B cell (primary cell): ENCODE measurements at regions of chr9 and their contacts with region 1.

Region 1: GRCh38 chr9:92669890-92670708 is at the start of gene IPPK:
- DNase-seq: peak; percentile 98
- ATAC-seq: peak; percentile 92
- H3K4me3 ChIP-seq: peak within 1 kb of the TSS; percentile 93 to 100 (median 99)
- H3K4me3 Mint-ChIP-seq: peak within 1 kb of the TSS; percentile 97
- H3K27ac ChIP-seq: peak within 1 kb of the TSS; percentile 87 to 99
- H3K27ac Mint-ChIP-seq: peak within 1 kb of the TSS; percentile 95
- H3K4me1 ChIP-seq: peaks cover 17 to 23% of the 10 kb centered on the region in 2 donors
- H3K4me1 Mint-ChIP-seq: peaks cover 27% of the 10 kb centered on the region
- H3K27me3 ChIP-seq: no peaks in the 10 kb centered on the region
- H3K27me3 Mint-ChIP-seq: no peaks in the 10 kb centered on the region
- CTCF ChIP-seq: no peak
- total RNA-seq, gene IPPK: 6.8 and 8.5 TPM in 2 replicates

Region 2: GRCh38 chr9:92496396-92497176 is 173.5 kb before region 1 on chr9:
- CTCF ChIA-PET with region 1: no interaction called
- POLR2A ChIA-PET with region 1: no interaction called
- intact Hi-C with region 1: no loop called
- DNase-seq: no peak
- ATAC-seq: no peak
- H3K4me3 ChIP-seq: no peak overlapping the region
- H3K4me3 Mint-ChIP-seq: no peak overlapping the region
- H3K27ac ChIP-seq: no peak overlapping the region
- H3K27ac Mint-ChIP-seq: no peak overlapping the region
- H3K4me1 ChIP-seq: no peaks in the 10 kb centered on the region
- H3K4me1 Mint-ChIP-seq: no peaks in the 10 kb centered on the region
- H3K27me3 ChIP-seq: no peaks in the 10 kb centered on the region
- H3K27me3 Mint-ChIP-seq: no peaks in the 10 kb centered on the region
- CTCF ChIP-seq: no peak

Region 3: GRCh38 chr9:92686954-92687353 is 16.9 kb after region 1 on chr9:
- CTCF ChIA-PET with region 1: no interaction called
- POLR2A ChIA-PET with region 1: no interaction called
- intact Hi-C with region 1: no loop called
- DNase-seq: no peak
- ATAC-seq: no peak
- H3K4me3 ChIP-seq: no peak overlapping the region
- H3K4me3 Mint-ChIP-seq: no peak overlapping the region
- H3K27ac ChIP-seq: no peak overlapping the region
- H3K27ac Mint-ChIP-seq: no peak overlapping the region
- H3K4me1 ChIP-seq: peaks cover 0 to 3% of the 10 kb centered on the region in 2 donors
- H3K4me1 Mint-ChIP-seq: peaks cover 9% of the 10 kb centered on the region
- H3K27me3 ChIP-seq: no peaks in the 10 kb centered on the region
- H3K27me3 Mint-ChIP-seq: no peaks in the 10 kb centered on the region
- CTCF ChIP-seq: no peak

Region 4: DNA sequence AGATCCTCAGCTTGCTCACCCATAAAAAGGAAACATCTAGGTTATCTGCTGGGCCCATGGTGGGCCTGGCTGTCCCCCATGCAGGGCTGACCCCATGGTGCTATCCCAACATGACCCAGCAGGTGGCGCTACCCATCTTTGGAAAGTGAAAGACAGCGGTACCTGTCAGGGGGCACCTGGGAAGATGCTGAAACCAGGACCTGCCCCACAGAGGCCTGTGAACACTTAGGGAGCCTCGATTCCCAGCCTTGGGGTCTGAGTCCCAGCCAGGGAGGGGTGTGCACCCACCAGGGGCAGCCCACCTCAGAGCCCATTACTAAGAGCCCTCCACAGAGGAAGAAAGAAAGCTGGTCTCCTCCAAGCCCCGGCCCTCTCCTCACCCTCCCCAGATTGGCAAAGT is 46.5 kb after region 1 on chr9:
- CTCF ChIA-PET with region 1: interaction called, 13 read pairs
- POLR2A ChIA-PET with region 1: no interaction called
- intact Hi-C with region 1: no loop called
- DNase-seq: peak; percentile 82
- ATAC-seq: peak; percentile 79
- H3K4me3 ChIP-seq: no peak overlapping the region
- H3K4me3 Mint-ChIP-seq: no peak overlapping the region
- H3K27ac ChIP-seq: no peak overlapping the region
- H3K27ac Mint-ChIP-seq: no peak overlapping the region
- H3K4me1 ChIP-seq: peaks cover 31 to 66% of the 10 kb centered on the region in 2 donors
- H3K4me1 Mint-ChIP-seq: peaks cover 54% of the 10 kb centered on the region
- H3K27me3 ChIP-seq: no peaks in the 10 kb centered on the region
- H3K27me3 Mint-ChIP-seq: no peaks in the 10 kb centered on the region
- CTCF ChIP-seq: peak; percentile 93

Region 5: DNA sequence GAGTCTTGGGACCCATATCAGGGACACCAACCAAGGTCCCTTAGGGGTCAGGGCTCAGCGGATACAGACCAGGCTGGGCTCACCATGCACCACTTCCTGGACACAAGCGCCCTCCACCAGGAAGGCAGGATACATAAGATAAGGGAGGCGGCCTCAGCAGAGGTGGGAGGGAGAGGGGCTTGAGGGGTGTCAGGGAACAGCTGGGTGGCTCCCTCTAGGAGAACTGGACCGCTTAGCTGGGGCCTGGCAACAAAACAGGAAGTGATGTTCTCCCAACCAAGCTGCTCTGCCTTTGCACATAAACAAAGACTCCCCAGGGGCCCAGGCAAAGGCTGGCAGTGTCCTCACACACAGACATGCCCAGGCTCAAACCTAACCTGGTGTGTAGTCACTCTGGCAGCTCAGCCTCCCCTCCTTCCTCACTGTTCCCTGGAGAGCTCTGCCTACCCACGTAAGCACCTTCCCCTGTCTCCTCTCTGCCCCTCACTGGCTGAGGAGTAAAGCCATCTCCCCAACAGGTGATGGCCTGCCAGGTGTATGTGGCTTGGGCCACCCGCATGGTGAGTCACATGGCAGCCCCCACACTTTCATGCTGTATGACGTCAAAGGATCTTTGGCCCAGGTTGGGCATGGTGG is 100.4 kb after region 1 on chr9:
- CTCF ChIA-PET with region 1: interaction called, 4 read pairs
- POLR2A ChIA-PET with region 1: interaction called, 13 read pairs
- intact Hi-C with region 1: loop called (anchors 1 kb)
- DNase-seq: peak; percentile 82
- ATAC-seq: peak; percentile 94
- H3K4me3 ChIP-seq: peak overlapping the region in 3 of 5 experiments; percentile 2 to 17 (median 12)
- H3K4me3 Mint-ChIP-seq: peak overlapping the region; percentile 74
- H3K27ac ChIP-seq: peak overlapping the region; percentile 79 to 88
- H3K27ac Mint-ChIP-seq: peak overlapping the region; percentile 97
- H3K4me1 ChIP-seq: peaks cover 31 to 40% of the 10 kb centered on the region in 2 donors
- H3K4me1 Mint-ChIP-seq: peaks cover 44% of the 10 kb centered on the region
- H3K27me3 ChIP-seq: no peaks in the 10 kb centered on the region
- H3K27me3 Mint-ChIP-seq: no peaks in the 10 kb centered on the region
- CTCF ChIP-seq: no peak

Region 6: DNA sequence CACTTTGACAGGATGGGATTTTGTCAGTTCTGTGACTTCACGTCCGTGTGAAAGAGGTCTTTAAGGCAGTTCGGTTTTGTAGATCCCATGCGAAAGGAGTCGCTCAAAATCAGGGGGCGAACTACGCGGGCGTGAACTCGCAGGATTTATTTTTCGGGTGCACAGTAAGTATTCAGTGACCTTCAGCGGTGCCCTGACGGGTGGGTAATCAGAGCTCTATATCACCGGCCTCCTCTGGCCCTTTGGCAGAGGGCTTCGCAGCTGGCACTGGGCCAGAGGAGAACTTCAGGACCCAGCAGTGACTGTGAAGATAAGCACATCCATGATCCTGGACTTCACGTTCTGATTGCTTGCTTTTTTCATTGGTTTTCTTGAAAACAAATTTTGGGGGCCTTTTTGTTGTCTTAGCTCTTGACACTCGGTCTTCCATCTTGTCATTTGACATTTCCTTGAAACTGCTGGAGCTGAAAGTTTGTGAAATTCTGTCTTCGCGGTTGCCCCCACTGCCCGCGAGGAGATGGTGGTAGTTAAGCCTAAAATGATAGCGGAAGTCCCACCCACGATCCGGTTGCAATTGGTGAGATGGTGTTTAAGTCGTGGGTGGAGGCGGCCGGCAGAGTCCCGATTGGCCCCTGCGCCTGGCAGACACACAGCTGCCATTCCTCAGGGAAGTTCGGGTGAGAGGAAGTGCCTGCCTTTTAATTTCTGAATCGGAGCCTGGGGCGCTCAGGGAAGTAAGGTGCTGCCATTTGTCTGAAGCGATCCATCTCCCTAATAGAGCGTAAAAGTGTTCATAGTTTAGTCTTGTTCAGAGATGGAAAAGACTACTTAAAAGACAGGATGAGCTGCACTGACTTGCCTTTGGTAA is 783.2 kb after region 1 on chr9 and contains the start of gene FAM120AOS:
- CTCF ChIA-PET with region 1: no interaction called
- POLR2A ChIA-PET with region 1: no interaction called
- intact Hi-C with region 1: loop called (anchors 10 kb)
- DNase-seq: peak; percentile 92
- ATAC-seq: peak; percentile 72
- H3K4me3 ChIP-seq: peak within 1 kb of the TSS; percentile 73 to 96 (median 84)
- H3K4me3 Mint-ChIP-seq: peak within 1 kb of the TSS; percentile 93
- H3K27ac ChIP-seq: peak within 1 kb of the TSS; percentile 65 to 79
- H3K27ac Mint-ChIP-seq: peak within 1 kb of the TSS; percentile 93
- H3K4me1 ChIP-seq: peaks cover 20 to 29% of the 10 kb centered on the region in 2 donors
- H3K4me1 Mint-ChIP-seq: peaks cover 44% of the 10 kb centered on the region
- H3K27me3 ChIP-seq: no peaks in the 10 kb centered on the region
- H3K27me3 Mint-ChIP-seq: no peaks in the 10 kb centered on the region
- CTCF ChIP-seq: no peak
- total RNA-seq, gene FAM120AOS: 47.8 and 51.2 TPM in 2 replicates

Region 7: GRCh38 chr9:94259077-94259892 is 1589.2 kb after region 1 on chr9 and contains the start of gene ZNF169:
- CTCF ChIA-PET with region 1: no interaction called
- POLR2A ChIA-PET with region 1: no interaction called
- intact Hi-C with region 1: loop called (anchors 5 kb)
- DNase-seq: peak; percentile 85
- ATAC-seq: peak; percentile 100
- H3K4me3 ChIP-seq: peak within 1 kb of the TSS; percentile 79 to 100 (median 82)
- H3K4me3 Mint-ChIP-seq: peak within 1 kb of the TSS; percentile 97
- H3K27ac ChIP-seq: peak within 1 kb of the TSS; percentile 26 to 77
- H3K27ac Mint-ChIP-seq: peak within 1 kb of the TSS; percentile 96
- H3K4me1 ChIP-seq: peaks cover 7 to 19% of the 10 kb centered on the region in 2 donors
- H3K4me1 Mint-ChIP-seq: peaks cover 28% of the 10 kb centered on the region
- H3K27me3 ChIP-seq: peaks cover 0 to 6% (median 4%) of the 10 kb centered on the region in 4 experiments
- H3K27me3 Mint-ChIP-seq: peaks cover 3% of the 10 kb centered on the region
- CTCF ChIP-seq: no peak
- total RNA-seq, gene ZNF169: 26.2 and 26.9 TPM in 2 replicates